Heart right ventricle (tissue), 16 donors: ENCODE measurements at regions of chr15 and their contacts with region 1.

Region 1: GRCh38 chr15:62986948-62987347 is 55.6 kb upstream of the TPM1 start:
- DNase-seq: no peak
- ATAC-seq: no peak
- H3K4me3 ChIP-seq: no peak overlapping the region
- H3K27ac ChIP-seq: no peak overlapping the region
- H3K4me1 ChIP-seq: peaks cover 0 to 6% (median 0%) of the 10 kb centered on the region in 9 donors
- H3K27me3 ChIP-seq: no peaks in the 10 kb centered on the region
- CTCF ChIP-seq: no peak

Region 2: GRCh38 chr15:62976301-62976881 is 10.6 kb before region 1 on chr15:
- intact Hi-C with region 1: no loop called
- DNase-seq: no peak
- ATAC-seq: no peak
- H3K4me3 ChIP-seq: no peak overlapping the region
- H3K27ac ChIP-seq: no peak overlapping the region
- H3K4me1 ChIP-seq: peaks cover 0 to 18% (median 0%) of the 10 kb centered on the region in 9 donors
- H3K27me3 ChIP-seq: no peaks in the 10 kb centered on the region
- CTCF ChIP-seq: no peak

Region 3: DNA sequence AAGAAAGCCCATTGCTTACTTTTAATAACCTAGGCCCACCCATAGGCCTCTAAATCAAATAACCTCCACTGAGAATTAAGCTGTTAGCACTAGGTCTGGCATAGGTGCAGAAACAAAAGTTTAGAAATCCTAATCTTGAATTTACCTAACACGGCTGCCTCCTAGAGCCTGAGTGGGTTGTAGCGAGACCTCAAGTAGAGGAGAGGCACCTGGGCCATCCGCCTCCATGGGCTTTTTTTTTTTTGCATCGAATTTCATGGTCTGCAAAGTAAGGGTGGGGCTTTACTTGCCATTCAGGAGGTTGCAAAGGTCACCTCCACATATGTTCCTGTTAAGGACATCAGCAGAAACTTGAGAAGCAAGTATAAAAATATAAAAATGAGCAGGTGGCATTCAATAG is 49.0 kb after region 1 on chr15:
- intact Hi-C with region 1: loop called in 1 of 10 experiments (anchors 1 kb)
- DNase-seq: no peak
- ATAC-seq: no peak
- H3K4me3 ChIP-seq: no peak overlapping the region
- H3K27ac ChIP-seq: no peak overlapping the region
- H3K4me1 ChIP-seq: peaks cover 0 to 17% (median 5%) of the 10 kb centered on the region in 9 donors
- H3K27me3 ChIP-seq: peaks cover 0 to 17% (median 0%) of the 10 kb centered on the region in 7 donors
- CTCF ChIP-seq: no peak